Calu3 (cell line): ENCODE measurements at regions of chr7 and their contacts with region 1.

Region 1: DNA sequence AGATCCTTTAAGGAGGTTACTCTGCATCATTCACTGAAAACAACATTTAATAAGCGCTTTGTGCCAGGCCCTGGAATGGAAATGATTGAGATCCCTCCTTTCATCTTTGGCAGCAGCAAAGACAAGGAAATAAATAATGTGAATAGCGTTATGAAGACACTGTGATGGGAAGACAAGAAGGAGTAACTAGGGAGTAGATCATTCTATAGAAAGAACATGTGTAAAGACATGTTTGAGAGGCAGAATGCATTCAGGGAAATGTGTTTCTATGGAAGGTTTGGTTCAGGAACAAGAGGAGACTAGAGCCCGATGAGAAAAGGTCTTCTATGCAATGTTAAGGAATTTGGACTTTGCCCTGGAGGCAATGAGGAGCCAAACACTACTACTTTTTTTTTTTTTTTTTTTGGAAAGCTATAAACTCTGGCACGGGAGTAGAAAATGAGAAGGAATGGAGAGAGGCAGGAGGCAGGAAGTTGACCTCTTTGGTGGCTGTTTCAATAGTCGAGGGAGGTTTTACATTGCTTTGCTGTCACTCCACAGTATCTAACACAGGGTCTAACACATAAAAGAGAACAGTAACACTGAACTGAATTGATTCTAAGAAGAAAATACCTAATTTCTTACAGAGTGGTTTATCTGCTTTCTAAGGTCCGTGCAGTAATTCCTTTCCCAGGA is 44.9 kb downstream of the SMURF1 start:
- DNase-seq: peak; percentile 21
- H3K4me3 Mint-ChIP-seq: peak overlapping the region; percentile 11
- H3K27ac Mint-ChIP-seq: peak overlapping the region; percentile 2
- H3K4me1 Mint-ChIP-seq: peaks cover 24% of the 10 kb centered on the region
- H3K27me3 Mint-ChIP-seq: no peaks in the 10 kb centered on the region
- CTCF ChIP-seq: no peak

Region 2: GRCh38 chr7:99050971-99051370 is 48.0 kb before region 1 on chr7:
- CTCF ChIA-PET with region 1: interaction called, 4 read pairs
- intact Hi-C with region 1: loop called (anchors 5 kb)
- DNase-seq: no peak
- H3K4me3 Mint-ChIP-seq: no peak overlapping the region
- H3K27ac Mint-ChIP-seq: peak overlapping the region; percentile 33
- H3K4me1 Mint-ChIP-seq: peaks cover 14% of the 10 kb centered on the region
- H3K27me3 Mint-ChIP-seq: no peaks in the 10 kb centered on the region
- CTCF ChIP-seq: no peak

Region 3: GRCh38 chr7:99132595-99133321 is 33.8 kb after region 1 on chr7:
- CTCF ChIA-PET with region 1: interaction called, 3 read pairs
- intact Hi-C with region 1: loop called (anchors 5 kb)
- DNase-seq: no peak
- H3K4me3 Mint-ChIP-seq: peak overlapping the region; percentile 29
- H3K27ac Mint-ChIP-seq: peak overlapping the region; percentile 2
- H3K4me1 Mint-ChIP-seq: peaks cover 46% of the 10 kb centered on the region
- H3K27me3 Mint-ChIP-seq: no peaks in the 10 kb centered on the region
- CTCF ChIP-seq: no peak